Activated CD4-positive, alpha-beta T cell treated with anti-CD3 and anti-CD28 coated beads, Interleukin-2, amount 10 ng/mL, durations not matched to agents 24 days and 14 days (primary cell): ENCODE measurements at regions of chr14 and their contacts with region 1.

Region 1: GRCh38 chr14:67526676-67527459 is 6.2 kb upstream of the PLEKHH1 start:
- DNase-seq: peak; percentile 82
- H3K4me3 Mint-ChIP-seq: no peak overlapping the region
- H3K27ac Mint-ChIP-seq: no peak overlapping the region
- H3K4me1 Mint-ChIP-seq: no peaks in the 10 kb centered on the region
- H3K27me3 Mint-ChIP-seq: peaks cover 56% of the 10 kb centered on the region

Region 2: DNA sequence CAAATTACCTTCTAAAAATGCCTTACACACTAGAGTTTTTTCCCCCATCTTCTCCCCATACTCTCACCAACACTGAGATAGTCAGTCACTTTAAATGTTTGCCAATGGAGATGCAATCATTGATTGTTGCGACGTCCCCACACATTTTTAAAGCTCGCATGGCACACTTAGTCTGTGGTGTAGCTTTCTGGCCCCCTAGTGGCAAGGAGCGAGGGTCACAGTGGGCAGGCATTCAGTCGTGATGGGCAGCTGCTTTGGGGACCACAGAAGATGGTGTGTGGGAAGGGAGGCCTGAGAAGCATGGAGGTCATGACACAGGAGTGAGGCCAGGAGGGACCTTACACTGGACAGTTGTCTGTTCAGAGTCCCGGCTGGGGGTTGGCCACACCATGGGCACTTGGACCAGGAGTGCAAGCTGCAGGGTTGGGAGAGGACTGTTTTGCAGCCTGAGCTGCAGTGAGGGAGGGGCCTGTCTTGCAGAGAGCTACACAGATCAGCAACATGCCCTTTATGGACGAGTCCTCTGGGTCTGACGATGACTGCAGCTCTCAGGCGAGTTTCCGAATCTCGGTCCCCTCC is 44.5 kb after region 1 on chr14:
- intact Hi-C with region 1: loop called (anchors 1 kb)
- DNase-seq: peak; percentile 90
- H3K4me3 Mint-ChIP-seq: no peak overlapping the region
- H3K27ac Mint-ChIP-seq: no peak overlapping the region
- H3K4me1 Mint-ChIP-seq: peaks cover 14% of the 10 kb centered on the region
- H3K27me3 Mint-ChIP-seq: no peaks in the 10 kb centered on the region

Region 3: DNA sequence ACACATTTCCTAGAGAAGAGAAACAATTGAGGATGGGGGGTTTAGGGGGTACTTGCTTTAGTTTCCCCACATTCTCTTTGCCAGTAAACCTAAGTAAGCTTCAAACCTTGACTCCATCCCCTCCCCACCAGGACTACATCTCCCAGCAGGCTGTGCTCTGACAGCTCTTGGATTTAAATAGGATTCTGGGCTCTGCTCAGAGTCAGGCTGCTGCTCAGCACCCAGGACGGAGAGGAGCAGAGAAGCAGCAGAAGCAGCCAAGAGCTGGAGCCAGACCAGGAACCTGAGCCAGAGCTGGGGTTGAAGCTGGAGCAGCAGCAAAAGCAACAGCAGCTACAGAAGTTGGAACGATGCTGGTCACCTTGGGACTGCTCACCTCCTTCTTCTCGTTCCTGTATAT is 195.4 kb after region 1 on chr14:
- intact Hi-C with region 1: no loop called
- DNase-seq: no peak
- H3K4me3 Mint-ChIP-seq: no peak overlapping the region
- H3K27ac Mint-ChIP-seq: no peak overlapping the region
- H3K4me1 Mint-ChIP-seq: peaks cover 2% of the 10 kb centered on the region
- H3K27me3 Mint-ChIP-seq: peaks cover 33% of the 10 kb centered on the region

Region 4: DNA sequence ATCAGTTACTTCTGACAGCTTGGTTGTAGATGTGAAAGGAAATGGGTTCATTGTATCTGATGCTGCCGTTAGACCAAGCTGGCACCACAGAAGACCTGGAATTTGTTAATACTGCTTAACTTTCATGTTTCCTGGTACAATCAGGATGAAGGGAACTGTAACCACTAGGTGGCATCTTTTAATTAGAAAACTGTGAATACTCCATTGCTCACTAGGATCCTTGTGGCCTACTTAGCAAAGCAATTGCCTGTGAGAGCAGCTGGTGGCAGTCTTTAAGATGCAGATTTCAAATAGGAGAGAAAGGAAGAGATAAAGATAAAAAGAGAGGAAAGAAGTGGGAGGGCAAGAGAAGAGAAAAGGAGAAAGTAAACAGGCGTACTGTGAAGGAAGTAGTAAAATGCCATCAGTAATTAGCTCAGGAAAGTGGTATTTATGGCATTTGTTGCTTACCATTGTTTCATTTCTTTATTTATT is 407.2 kb after region 1 on chr14:
- intact Hi-C with region 1: no loop called
- DNase-seq: peak; percentile 68
- H3K4me3 Mint-ChIP-seq: no peak overlapping the region
- H3K27ac Mint-ChIP-seq: no peak overlapping the region
- H3K4me1 Mint-ChIP-seq: peaks cover 2% of the 10 kb centered on the region
- H3K27me3 Mint-ChIP-seq: no peaks in the 10 kb centered on the region